CD8-positive, alpha-beta memory T cell (primary cell): ENCODE measurements at regions of chr1 and their contacts with region 1.

Region 1: GRCh38 chr1:203593723-203594122 is 32.9 kb upstream of the ATP2B4 start:
- DNase-seq: peak; percentile 29 to 78 (median 47)
- H3K4me3 ChIP-seq: no peak overlapping the region
- H3K4me3 Mint-ChIP-seq: no peak overlapping the region
- H3K27ac ChIP-seq: no peak overlapping the region
- H3K27ac Mint-ChIP-seq: peak overlapping the region in 2 of 8 donors; percentile 30 to 74
- H3K4me1 ChIP-seq: no peaks in the 10 kb centered on the region
- H3K4me1 Mint-ChIP-seq: peaks cover 10 to 17% (median 11%) of the 10 kb centered on the region in 3 donors
- H3K27me3 ChIP-seq: no peaks in the 10 kb centered on the region
- H3K27me3 Mint-ChIP-seq: no peaks in the 10 kb centered on the region

Region 2: DNA sequence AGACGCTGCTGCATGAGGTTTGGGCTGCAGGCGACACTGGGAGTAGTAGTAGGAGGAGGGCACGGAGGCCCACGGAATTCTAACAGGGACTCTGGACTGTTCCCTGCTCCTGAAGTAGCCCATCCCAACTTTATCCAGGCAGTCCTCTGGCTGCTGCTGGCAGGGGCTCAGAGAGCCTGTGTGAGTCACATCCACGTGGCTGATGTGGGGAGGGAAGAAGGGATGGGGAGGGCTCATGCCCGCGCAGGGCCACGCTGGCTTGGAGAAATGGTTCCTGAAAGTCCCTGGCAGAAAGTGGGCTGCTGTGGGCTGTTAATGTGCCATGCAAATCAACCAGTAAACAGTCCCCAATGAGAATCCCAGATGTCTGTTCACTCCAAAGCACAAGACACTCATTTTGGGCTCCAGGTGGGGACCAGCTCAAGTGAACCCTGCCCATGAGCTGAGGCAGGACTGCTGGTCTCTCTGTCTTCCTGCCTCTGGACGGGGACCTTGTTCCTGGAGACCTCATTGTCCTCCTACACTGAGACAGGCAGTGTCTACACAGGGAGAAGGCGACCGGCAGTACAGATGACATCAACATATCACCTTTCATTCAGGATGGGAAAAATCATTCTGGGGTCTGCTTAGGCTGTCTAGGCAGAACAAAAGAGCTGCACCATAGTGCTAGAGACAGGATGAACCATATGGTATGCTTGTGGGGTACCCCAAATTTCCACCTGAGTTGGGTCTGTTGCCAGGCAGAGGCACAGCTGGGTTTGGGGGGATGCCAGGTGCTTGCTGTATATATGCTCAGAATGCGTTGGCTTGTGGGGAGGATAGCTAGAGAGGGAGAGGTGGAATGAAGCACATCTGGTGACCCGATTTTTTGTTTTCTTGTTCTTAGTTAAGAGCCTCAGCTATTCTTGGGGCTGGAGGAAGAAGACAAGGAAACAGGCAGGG is 185.0 kb before region 1 on chr1:
- CTCF ChIA-PET with region 1: no interaction called
- POLR2A ChIA-PET with region 1: no interaction called
- DNase-seq: no peak
- H3K4me3 ChIP-seq: no peak overlapping the region
- H3K4me3 Mint-ChIP-seq: no peak overlapping the region
- H3K27ac ChIP-seq: no peak overlapping the region
- H3K27ac Mint-ChIP-seq: no peak overlapping the region
- H3K4me1 ChIP-seq: no peaks in the 10 kb centered on the region
- H3K4me1 Mint-ChIP-seq: no peaks in the 10 kb centered on the region
- H3K27me3 ChIP-seq: no peaks in the 10 kb centered on the region
- H3K27me3 Mint-ChIP-seq: peaks cover 34 to 66% of the 10 kb centered on the region in 2 donors

Region 3: GRCh38 chr1:203607533-203607873 is 13.8 kb after region 1 on chr1:
- CTCF ChIA-PET with region 1: interaction called, 27 read pairs
- POLR2A ChIA-PET with region 1: no interaction called
- DNase-seq: no peak
- H3K4me3 ChIP-seq: no peak overlapping the region
- H3K4me3 Mint-ChIP-seq: peak overlapping the region in 3 of 7 donors; percentile 73 to 93 (median 81)
- H3K27ac ChIP-seq: no peak overlapping the region
- H3K27ac Mint-ChIP-seq: peak overlapping the region; percentile 82 to 100 (median 97)
- H3K4me1 ChIP-seq: peaks cover 37% of the 10 kb centered on the region
- H3K4me1 Mint-ChIP-seq: peaks cover 42 to 66% (median 65%) of the 10 kb centered on the region in 3 donors
- H3K27me3 ChIP-seq: no peaks in the 10 kb centered on the region
- H3K27me3 Mint-ChIP-seq: peaks cover 0 to 1% of the 10 kb centered on the region in 2 donors